ENCODE measurements at regions of chr12 and their contacts with region 1.

Region 1: GRCh38 chr12:109804820-109805761 is 28.1 kb downstream of the TRPV4 start:
- DNase-seq: no peak
- H3K4me3 ChIP-seq: no peak overlapping the region
- CTCF ChIP-seq: peak; percentile 93

Region 2: DNA sequence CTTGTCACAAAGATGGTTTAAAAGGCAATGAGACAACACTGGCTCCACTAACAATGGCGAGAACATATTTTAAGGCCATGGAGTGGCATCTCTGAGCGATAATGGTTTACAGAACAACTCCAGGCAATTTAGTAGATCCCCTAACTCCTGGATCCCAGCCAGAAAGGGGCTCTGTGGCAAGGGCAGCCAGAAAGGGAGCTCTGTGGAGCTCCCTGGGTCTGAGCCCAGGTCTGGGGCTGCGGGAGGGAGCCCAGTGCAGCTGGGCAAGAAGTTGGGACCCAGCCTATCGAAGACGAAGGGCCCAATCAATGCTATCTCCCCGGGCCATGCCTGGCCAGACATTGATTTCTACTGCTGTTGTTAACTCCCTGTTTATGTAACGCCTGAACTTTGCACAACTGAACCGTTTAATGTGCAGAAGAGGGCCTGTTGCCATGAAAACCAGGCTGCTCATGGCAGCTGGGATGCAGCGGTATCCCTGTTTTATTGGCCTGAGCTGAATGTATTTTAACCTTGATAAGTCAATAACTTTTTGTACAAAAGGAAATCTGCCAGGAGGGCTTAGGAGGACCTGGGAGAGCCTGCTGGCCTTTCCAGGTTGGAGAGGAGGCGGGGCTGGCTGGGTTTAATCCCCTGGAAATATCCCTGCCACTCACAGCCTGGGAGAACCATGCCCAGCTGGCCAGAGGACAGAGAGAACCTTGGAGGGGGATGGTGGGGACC is 98.2 kb before region 1 on chr12:
- CTCF ChIA-PET with region 1: no interaction called
- POLR2A ChIA-PET with region 1: no interaction called
- DNase-seq: no peak
- H3K4me3 ChIP-seq: no peak overlapping the region
- CTCF ChIP-seq: no peak

Region 3: DNA sequence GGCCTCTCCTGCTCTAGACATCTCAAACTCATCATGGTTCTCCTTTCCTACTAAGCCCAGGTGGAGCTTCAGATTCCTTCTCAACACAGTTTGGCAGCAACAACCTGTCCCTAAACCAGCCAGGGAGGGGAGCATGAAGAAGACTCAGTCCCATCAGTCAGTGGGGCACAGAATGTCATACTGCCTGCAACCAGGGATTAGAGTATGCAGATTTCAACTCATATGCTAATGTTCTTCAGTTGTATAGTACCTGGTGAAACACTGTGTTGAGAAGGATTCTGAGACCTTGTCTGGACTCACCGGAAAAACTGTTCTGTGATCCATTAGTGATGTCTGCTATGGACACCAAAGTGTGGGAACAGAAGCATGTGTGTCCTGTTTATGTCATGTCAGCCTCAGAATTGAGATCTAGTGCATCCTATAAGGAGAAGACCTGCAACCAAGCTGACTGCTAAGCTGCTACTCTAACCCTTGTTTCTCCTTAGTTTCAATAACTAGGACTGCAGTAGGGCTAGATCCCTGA is 15.5 kb before region 1 on chr12:
- CTCF ChIA-PET with region 1: interaction called, 57 read pairs
- POLR2A ChIA-PET with region 1: no interaction called
- DNase-seq: no peak
- H3K4me3 ChIP-seq: no peak overlapping the region
- CTCF ChIP-seq: no peak

Region 4: GRCh38 chr12:109818905-109819500 is 13.9 kb after region 1 on chr12:
- CTCF ChIA-PET with region 1: interaction called, 87 read pairs
- POLR2A ChIA-PET with region 1: no interaction called
- DNase-seq: peak; percentile 34
- H3K4me3 ChIP-seq: no peak overlapping the region
- CTCF ChIP-seq: no peak

Region 5: DNA sequence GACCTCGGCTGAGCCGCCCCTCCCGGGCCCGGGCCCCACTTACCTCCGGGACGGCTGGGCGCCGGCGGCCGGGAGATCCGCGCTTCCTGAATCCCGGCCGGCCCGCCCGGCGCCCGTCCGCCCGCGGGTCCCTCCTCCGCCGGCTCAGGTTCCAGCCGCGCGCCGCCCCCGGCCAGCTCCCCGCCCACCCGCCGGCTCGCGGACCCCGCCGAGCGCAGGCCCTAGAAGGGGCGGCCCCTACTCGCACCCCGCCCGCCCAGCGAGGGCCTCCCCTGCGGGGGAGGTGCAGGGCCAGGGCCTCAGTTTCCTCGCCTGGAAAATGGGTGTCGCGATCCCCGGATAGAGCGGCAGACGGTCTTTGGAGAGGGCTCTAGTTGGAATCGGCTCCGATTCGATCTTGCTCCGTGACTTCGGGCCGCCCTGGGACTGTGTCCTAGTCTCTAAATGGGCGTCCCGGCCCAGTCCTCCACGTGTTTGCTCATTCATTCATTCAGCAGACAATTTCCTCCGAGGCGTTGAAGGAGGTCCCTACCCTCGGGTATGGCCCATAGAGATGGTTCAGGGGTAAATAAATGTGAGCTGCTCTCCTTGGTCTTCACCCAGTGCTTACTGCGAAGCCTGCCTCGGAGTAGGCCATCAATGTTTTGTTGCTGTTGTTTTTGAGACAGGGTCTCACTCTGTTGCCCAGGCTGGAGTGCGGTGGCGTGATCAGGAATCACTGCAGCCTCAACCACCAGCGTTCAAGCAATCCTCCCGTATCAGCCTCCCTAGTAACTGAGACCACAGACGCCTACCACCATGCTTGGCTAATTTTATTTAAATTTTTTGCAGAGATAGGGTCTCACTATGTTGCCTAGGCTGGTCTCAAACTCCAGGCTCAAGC is 28.5 kb after region 1 on chr12 and contains the start of gene TRPV4:
- CTCF ChIA-PET with region 1: interaction called, 275 read pairs
- POLR2A ChIA-PET with region 1: no interaction called
- DNase-seq: no peak
- H3K4me3 ChIP-seq: peak within 1 kb of the TSS; percentile 63
- CTCF ChIP-seq: no peak

Region 6: GRCh38 chr12:109880016-109880931 is 75.2 kb after region 1 on chr12 and contains the start of gene GLTP:
- CTCF ChIA-PET with region 1: interaction called, 20 read pairs
- POLR2A ChIA-PET with region 1: interaction called, 7 read pairs
- DNase-seq: no peak
- H3K4me3 ChIP-seq: peak within 1 kb of the TSS; percentile 68
- CTCF ChIP-seq: peak; percentile 51

Region 7: GRCh38 chr12:109920261-109920780 is 115.2 kb after region 1 on chr12:
- CTCF ChIA-PET with region 1: interaction called, 13 read pairs
- POLR2A ChIA-PET with region 1: no interaction called
- DNase-seq: no peak
- H3K4me3 ChIP-seq: no peak overlapping the region
- CTCF ChIP-seq: peak; percentile 9

Region 8: GRCh38 chr12:109951751-109952150 is 146.7 kb after region 1 on chr12:
- CTCF ChIA-PET with region 1: no interaction called
- POLR2A ChIA-PET with region 1: no interaction called
- DNase-seq: peak; percentile 33
- H3K4me3 ChIP-seq: peak overlapping the region; percentile 16; the same call in 1 of the 2 replicates
- CTCF ChIP-seq: peak; percentile 8